GM13977 (cell line): ENCODE measurements at regions of chr15 and their contacts with region 1.

Region 1: DNA sequence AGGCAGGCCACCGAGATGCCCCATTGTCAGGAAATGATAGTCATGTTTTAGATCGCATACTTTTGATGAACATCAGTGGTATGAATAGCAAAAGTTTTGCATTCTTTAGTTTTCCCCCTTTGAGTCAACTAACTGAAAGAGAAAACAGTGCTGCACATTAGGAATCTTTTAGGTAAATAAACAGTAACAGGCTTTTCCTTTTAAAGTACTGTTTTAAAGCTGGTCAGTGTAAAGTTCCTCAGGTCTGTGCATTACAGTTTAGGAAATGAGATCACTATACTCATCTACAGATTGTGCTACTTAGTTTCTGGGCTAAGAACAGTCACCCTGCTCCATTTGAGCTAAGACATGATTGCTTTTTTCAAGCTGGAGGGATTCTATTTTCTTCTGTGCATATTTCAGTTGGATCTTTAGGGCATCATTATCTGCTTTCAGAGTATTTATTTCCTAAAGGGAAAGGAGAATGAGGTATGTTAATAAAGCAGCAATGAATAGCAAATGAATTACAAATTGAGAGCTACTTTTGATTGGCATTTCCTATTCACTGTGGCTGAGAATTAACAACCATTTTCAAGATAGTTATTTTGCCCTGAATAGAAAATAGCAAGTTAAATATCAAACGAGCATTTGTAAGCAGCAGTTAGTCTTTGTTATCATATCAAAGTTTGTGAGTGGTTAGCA is 36.5 kb downstream of the FAM98B start:
- DNase-seq: no peak
- CTCF ChIP-seq: no peak

Region 2: DNA sequence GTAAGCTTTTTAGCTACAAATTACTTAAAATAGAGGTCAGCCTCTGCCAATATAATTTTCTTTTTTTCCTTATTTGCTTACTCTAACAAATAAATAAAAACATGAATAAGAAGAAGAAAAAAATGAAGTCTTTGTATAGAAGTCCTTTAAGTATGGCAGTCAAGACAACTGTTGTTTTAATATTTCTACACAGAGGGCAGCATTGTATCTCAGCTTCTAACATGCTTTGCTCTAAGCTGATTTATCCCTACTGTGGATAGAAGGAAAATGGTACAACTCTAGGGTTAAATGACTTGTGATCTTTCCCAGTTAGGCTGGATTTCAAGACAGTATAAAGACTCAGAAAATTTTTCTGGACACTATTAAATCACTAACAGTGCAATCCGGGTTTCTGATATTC is 1285.7 kb before region 1 on chr15:
- in situ Hi-C with region 1: no loop called
- DNase-seq: no peak
- CTCF ChIP-seq: no peak

Region 3: DNA sequence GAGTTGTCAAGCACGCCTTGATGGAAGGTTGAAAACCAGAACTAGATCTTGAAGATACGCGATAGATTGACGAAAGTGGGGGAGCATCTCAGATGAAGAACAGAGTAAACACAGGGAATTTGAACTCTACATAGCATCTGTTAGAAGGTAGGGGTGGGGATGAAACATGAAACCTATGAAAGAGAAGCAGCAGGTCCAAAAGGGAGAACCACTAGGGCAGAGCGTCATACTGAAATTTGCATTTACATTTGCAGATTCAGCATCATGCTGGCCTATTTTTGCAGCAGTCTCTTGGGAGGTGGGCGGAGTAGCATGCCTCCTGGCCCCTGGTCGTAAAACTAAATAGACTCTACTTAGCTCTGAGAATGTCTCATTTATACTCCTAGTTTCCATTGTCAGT is 120.4 kb after region 1 on chr15:
- in situ Hi-C with region 1: no loop called
- DNase-seq: no peak
- CTCF ChIP-seq: no peak

Region 4: GRCh38 chr15:38671675-38672254 is 181.4 kb after region 1 on chr15:
- in situ Hi-C with region 1: loop called (anchors 25 kb)
- DNase-seq: no peak
- CTCF ChIP-seq: no peak